ENCODE measurements at regions of chr6 and their contacts with region 1.

Region 1: DNA sequence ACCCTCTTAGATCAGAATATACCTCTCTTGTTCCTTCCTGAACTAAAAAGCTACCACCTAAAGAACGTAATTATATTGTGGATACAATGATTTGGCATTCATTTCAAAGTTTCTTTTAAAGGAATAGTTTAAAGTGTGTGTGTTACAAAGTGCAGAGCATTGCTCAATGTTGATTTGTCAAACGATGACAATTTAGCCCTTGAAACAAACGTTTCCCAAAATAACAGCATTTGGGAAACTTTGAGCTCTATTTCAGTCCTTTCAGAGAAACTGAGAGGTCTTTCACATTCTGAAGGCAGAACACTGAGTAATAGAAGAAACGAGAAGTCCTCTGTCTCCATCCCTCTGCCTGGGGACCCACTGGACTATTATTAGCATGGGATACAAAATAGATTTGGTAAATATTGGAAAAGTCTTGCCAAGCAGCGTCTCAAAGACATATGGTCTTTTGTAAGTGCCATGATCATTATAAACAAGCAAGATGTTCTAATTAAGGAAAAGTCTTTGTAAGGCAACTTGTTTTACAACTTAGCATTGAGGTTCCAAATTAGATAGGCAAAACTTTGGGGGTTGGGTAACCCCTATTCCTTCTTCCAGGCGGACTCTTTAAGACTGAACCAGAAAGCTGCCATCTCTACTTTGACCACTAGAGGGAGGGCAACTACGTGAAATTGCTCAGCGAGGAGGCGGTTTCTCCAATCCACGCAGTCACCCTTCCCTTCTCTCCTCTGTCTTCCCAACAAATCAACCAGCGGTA is 208.8 kb downstream of the RNF144B start:
- DNase-seq: peak in 1 of 2 donors; percentile 82
- H3K4me3 ChIP-seq: no peak overlapping the region
- CTCF ChIP-seq: peak in 1 of 3 donors; percentile 83
- POLR2A ChIP-seq: no peak

Region 2: DNA sequence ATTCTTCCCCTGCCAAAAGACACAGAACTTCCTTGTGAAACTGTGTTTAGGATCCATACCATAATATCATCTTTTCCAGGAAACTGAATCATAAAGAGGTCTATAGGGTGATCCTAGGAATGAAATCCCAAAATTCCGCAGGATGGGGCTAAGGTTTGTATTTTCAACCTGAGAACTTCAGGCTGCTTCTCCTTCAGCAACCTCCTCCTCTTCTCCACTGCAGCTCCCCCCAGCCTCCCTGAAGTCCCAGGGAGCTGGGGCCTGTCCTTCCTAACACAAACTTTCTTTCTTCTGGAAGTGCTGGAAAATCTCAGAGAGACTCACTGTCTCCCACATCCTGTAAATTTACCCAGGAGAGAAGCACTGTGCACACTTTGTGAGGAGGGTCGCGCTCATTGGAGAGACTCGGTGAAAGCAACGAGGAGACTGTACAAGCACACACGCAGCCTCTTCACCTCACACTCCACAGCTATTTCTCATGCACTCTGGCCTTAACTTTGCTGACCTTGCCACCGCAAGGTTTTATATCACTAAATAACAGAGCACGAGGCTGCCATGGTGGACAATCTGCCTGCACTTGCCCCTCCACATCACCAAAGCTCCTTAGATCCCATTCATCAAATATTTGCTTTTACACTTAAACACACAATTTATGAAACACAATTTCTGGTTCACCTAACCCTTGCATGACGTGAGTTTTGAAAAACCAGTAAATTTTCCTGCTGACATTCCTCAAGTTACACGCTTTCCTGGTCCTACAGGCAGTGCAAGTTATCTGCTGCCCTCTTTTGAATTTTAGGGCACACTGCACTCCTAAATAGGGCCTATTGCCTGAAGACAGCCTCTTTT is 1255.5 kb after region 1 on chr6:
- intact Hi-C with region 1: loop called (anchors 5 kb)
- DNase-seq: no peak
- H3K4me3 ChIP-seq: no peak overlapping the region
- CTCF ChIP-seq: peak in 1 of 3 donors; percentile 55
- POLR2A ChIP-seq: no peak

Region 3: DNA sequence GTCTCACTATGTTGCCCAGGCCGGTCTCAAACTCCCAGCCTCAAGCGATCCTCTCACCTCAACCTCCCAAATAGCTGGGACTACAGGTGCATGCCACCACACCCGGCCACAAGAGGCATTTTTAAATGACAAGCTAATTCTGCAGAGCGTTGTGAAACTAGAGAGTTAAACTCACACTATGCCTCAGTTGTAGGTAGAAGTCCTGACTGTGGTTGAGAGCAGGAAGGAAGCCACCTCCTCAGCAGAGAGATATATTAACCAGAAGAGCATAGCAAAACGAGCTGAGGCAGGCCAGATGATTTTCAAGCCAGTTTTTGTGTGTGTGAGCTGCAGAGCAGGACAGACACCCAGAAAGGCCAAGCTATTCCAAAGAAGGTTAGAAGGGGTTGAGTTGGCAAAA is 1466.0 kb after region 1 on chr6:
- intact Hi-C with region 1: loop called (anchors 10 kb)
- DNase-seq: no peak
- H3K4me3 ChIP-seq: no peak overlapping the region
- CTCF ChIP-seq: no peak
- POLR2A ChIP-seq: no peak